ENCODE measurements at regions of chrX and their contacts with region 1.

Region 1: DNA sequence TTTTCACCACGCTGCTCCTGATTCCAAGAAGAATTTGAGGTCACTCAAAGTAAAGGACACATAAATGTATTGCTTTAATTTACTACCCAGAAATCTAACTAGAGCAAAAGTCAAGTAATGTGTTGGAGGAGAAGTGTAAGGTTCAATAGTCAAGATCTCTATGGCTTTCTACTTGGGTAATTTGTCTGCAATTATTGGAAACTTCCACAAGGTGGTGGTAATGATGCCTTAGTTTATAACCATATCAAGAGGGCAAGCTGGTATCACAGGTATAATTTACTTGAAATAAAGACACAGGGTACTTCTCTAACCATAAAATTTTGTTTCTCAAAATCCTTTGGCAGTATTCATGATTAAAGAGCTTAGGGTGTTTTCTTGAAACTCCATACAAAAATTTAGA is 10.2 kb upstream of the GRIA3 start:
- DNase-seq: no peak
- ATAC-seq: no peak

Region 2: GRCh38 chrX:123330229-123330942 is 156.6 kb after region 1 on chrX:
- intact Hi-C with region 1: no loop called
- DNase-seq: no peak
- ATAC-seq: peak in 1 of 2 donors; percentile 15

Region 3: DNA sequence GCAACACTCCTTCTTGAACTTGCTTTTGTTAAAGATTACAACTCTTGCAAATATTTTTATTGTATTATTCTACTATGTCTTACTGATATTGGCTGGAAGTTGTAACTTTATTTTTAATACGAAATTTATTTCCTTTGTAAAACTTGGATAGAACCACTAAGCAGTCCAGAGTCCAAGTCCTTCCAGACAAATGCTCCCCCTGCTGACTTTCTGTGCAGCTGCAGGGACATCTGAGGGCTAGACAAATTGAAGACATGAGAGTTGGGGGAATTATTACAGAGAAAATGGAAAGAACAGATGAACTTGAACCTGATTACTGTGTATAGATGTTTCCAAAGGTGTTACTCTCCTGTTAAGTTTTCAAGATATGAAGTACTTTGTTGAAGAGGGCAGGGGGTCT is 249.0 kb after region 1 on chrX:
- intact Hi-C with region 1: loop called in 1 of 2 experiments (anchors 5 kb)
- DNase-seq: no peak
- ATAC-seq: no peak

Region 4: DNA sequence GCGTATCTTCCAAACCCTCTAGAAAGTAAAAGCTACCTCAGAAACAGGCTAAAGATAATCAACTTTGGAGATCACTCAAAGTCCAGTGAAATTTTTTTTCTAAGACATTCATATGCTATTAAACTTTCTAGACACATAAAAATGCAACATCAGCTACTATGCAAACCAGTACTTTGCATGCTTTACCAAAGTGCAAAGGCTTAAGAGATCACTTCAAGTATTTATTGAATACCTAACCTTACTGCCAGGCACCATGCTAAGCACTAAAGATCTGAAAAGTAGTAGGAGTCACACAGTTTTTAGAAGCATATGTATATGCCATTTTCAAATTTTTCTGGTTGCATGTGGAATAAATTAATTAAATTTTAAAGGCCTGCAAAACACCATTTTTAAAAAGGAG is 443.2 kb after region 1 on chrX:
- intact Hi-C with region 1: no loop called
- DNase-seq: no peak
- ATAC-seq: no peak